AG04450 (cell line): ENCODE measurements at regions of chr16 and their contacts with region 1.

Region 1: GRCh38 chr16:48623304-48624016 is 13.5 kb upstream of the N4BP1 start:
- DNase-seq: peak; percentile 71
- H3K4me3 ChIP-seq: peak overlapping the region; percentile 53
- H3K27ac ChIP-seq: peak overlapping the region; percentile 75
- H3K27me3 ChIP-seq: no peaks in the 10 kb centered on the region
- CTCF ChIP-seq: peak; percentile 99

Region 2: DNA sequence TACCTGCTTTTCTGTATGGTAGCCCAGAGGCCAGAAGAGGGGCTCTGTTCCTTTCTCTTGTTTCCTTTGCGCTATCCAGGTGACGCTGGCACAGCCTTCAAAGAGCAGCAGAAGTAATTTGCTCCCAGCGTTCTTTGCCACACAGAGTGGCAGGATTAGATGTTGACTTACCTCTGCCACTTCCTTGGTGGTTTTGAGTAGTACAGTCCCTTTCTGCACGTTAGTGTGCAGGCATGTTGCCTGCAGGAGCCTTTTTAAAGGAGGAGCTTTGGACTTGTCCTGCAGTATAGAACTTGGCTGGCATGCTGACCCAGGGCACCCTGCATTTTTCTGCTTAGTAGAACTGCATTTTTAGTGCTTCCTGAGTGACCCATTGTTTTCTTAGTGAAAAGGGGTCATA is 376.1 kb before region 1 on chr16 and contains the start of gene ABCC11:
- CTCF ChIA-PET with region 1: interaction called, 14 read pairs
- POLR2A ChIA-PET with region 1: no interaction called
- DNase-seq: no peak
- H3K4me3 ChIP-seq: no peak within 1 kb of the TSS
- H3K27ac ChIP-seq: no peak within 1 kb of the TSS
- H3K27me3 ChIP-seq: no peaks in the 10 kb centered on the region
- CTCF ChIP-seq: no peak
- polyA plus RNA-seq, gene ABCC11: 0.06 and 0.19 TPM in 2 replicates

Region 3: GRCh38 chr16:48317614-48318315 is 305.7 kb before region 1 on chr16:
- CTCF ChIA-PET with region 1: interaction called, 11 read pairs
- POLR2A ChIA-PET with region 1: no interaction called
- DNase-seq: no peak
- H3K4me3 ChIP-seq: no peak overlapping the region
- H3K27ac ChIP-seq: no peak overlapping the region
- H3K27me3 ChIP-seq: no peaks in the 10 kb centered on the region
- CTCF ChIP-seq: 0 out of 2 replicates have a peak, but pooled peaks have one; percentile 3

Region 4: GRCh38 chr16:48365581-48366164 is 257.8 kb before region 1 on chr16:
- CTCF ChIA-PET with region 1: interaction called, 44 read pairs
- POLR2A ChIA-PET with region 1: interaction called, 3 read pairs
- DNase-seq: no peak
- H3K4me3 ChIP-seq: peak overlapping the region; percentile 63
- H3K27ac ChIP-seq: peak overlapping the region; percentile 95
- H3K27me3 ChIP-seq: no peaks in the 10 kb centered on the region
- CTCF ChIP-seq: peak; percentile 17; the same call in 1 of the 2 replicates

Region 5: GRCh38 chr16:48494742-48495141 is 128.7 kb before region 1 on chr16:
- CTCF ChIA-PET with region 1: interaction called, 10 read pairs
- POLR2A ChIA-PET with region 1: no interaction called
- DNase-seq: no peak
- H3K4me3 ChIP-seq: no peak overlapping the region
- H3K27ac ChIP-seq: no peak overlapping the region
- H3K27me3 ChIP-seq: no peaks in the 10 kb centered on the region
- CTCF ChIP-seq: no peak

Region 6: GRCh38 chr16:48561960-48562393 is 61.5 kb before region 1 on chr16:
- CTCF ChIA-PET with region 1: interaction called, 10 read pairs
- POLR2A ChIA-PET with region 1: no interaction called
- DNase-seq: no peak
- H3K4me3 ChIP-seq: no peak overlapping the region
- H3K27ac ChIP-seq: no peak overlapping the region
- H3K27me3 ChIP-seq: no peaks in the 10 kb centered on the region
- CTCF ChIP-seq: no peak

Region 7: DNA sequence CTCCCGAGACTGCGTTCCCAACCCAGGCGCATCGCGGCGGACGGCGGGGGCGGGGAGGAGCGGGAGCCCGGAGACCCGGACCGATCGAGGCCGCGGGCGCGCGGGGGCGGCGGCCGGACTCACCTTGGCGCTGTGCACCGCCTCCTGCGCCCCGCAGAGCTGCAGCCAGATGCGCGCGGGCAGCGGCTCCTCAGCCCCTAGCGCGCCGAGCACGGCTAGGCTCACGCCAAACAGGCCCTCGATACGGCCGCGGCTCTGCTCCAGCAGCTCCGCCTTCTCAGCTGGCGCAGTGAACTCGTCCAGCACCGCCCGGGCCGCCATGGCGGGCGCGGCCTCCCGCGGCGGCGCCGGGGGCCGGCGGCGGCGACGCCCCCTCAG is 13.8 kb before region 1 on chr16:
- CTCF ChIA-PET with region 1: interaction called, 40 read pairs
- POLR2A ChIA-PET with region 1: interaction called, 4 read pairs
- DNase-seq: no peak
- H3K4me3 ChIP-seq: peak overlapping the region; percentile 99
- H3K27ac ChIP-seq: peak overlapping the region; percentile 52
- H3K27me3 ChIP-seq: no peaks in the 10 kb centered on the region
- CTCF ChIP-seq: no peak